ENCODE measurements at regions of chr6 and their contacts with region 1.

Region 1: DNA sequence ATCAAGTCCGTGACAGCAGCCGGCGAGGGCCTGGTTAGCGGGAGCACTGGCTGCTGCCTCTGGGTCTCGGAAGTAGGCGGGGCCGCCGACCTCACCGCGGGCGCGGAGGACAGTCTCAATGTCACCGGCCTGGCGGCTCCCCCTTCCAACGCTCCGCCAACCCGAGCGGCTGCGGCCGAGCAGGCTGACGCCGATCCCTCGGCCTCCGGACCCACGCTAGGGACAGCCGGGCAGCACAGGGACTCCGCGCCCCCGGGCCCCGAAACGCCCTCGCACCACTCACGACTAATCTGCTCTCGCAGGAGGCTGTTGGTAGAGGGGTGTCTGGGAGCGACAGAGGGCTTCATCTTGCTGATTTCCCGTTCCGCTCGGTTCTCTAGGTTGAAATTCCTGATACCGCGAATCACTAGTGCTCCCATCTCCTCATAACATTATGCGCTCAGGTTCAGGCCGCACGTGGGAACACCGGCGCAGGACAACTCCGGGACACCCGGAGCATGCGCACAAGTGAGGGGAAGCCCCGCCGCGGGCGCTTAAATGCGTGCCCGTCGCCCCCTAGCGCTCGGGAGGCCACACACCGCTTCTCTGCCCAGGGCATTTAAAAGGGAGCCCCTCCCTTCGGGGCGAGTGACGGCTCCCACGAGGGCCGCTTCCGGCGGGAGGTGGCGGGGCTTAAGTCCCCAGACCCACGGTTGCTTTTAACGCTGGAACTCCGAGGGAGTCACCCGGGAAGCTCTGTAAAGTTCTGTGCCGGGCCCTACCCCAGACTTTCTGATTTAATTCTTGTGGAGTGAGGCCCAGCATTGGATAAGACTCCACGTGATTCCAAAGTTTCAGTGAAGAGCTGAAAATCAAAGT is at the start of gene NDUFAF4:
- DNase-seq: peak; percentile 87 to 98
- H3K4me3 ChIP-seq: peak within 1 kb of the TSS; percentile 80 to 99
- H3K27ac ChIP-seq: peak within 1 kb of the TSS; percentile 82 to 92
- H3K4me1 ChIP-seq: peaks cover 2 to 15% of the 10 kb centered on the region in 2 donors
- H3K27me3 ChIP-seq: no peaks in the 10 kb centered on the region
- CTCF ChIP-seq: peak; percentile 91 to 93 (median 93)
- total RNA-seq, gene NDUFAF4: 4.8 TPM

Region 2: GRCh38 chr6:96542702-96543101 is 354.9 kb before region 1 on chr6:
- intact Hi-C with region 1: loop called (anchors 2 kb)
- DNase-seq: no peak
- H3K4me3 ChIP-seq: no peak overlapping the region
- H3K27ac ChIP-seq: no peak overlapping the region
- H3K4me1 ChIP-seq: no peaks in the 10 kb centered on the region
- H3K27me3 ChIP-seq: no peaks in the 10 kb centered on the region
- CTCF ChIP-seq: peak; percentile 30 to 63 (median 40)

Region 3: GRCh38 chr6:96837081-96837971 is 60.3 kb before region 1 on chr6 and contains the start of gene GPR63:
- intact Hi-C with region 1: loop called (anchors 2 kb)
- DNase-seq: peak in 1 of 2 donors; percentile 83
- H3K4me3 ChIP-seq: peak within 1 kb of the TSS; percentile 71 to 76
- H3K27ac ChIP-seq: peak within 1 kb of the TSS; percentile 31 to 54
- H3K4me1 ChIP-seq: peaks cover 0 to 4% of the 10 kb centered on the region in 2 donors
- H3K27me3 ChIP-seq: no peaks in the 10 kb centered on the region
- CTCF ChIP-seq: peak in 1 of 3 experiments; percentile 3
- total RNA-seq, gene GPR63: 0.85 TPM

Region 4: DNA sequence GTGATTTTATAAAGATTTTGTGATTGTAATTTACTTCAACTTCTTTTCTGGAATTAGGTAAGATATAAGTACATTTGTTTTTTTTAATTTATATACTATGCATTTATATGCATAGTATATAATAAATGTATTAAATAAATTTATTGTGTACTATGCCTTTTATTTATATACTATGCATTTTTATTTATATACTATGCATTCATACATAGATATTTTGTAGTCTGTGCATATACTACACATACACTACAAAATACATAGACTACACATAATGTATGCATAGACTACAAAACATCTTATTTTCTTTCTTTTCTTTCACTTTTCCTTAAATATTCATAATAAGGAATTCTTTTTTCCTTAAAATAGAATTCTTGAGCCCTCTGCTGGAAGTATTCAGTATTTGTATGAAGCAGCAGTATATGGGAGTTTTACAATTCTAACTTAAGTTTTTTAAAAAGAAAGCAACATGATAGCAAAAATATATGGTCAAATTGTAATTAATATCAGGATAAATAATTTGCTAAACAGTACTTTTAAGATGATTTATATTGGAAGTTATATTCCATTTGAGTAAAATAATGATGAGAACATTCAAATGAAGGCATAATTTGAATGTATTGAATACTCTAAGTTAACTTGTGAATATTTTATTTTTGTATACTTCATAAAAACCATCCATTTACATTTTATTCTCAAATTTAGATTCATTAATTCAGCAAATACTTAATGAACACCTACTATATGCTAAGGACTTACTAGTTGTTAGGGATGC is 156.2 kb after region 1 on chr6:
- intact Hi-C with region 1: loop called (anchors 1 kb)
- DNase-seq: no peak
- H3K4me3 ChIP-seq: no peak overlapping the region
- H3K27ac ChIP-seq: no peak overlapping the region
- H3K4me1 ChIP-seq: no peaks in the 10 kb centered on the region
- H3K27me3 ChIP-seq: no peaks in the 10 kb centered on the region
- CTCF ChIP-seq: peak in 2 of 3 experiments; percentile 50 to 59